ENCODE measurements at regions of chr2 and their contacts with region 1.

Region 1: GRCh38 chr2:232955856-232956255 is 57.2 kb downstream of the NGEF start:
- DNase-seq: peak; percentile 13
- ATAC-seq: peak; percentile 77
- H3K4me3 ChIP-seq: no peak overlapping the region
- H3K27ac ChIP-seq: no peak overlapping the region; the same call in 1 of the 2 replicates
- H3K4me1 ChIP-seq: peaks cover 19% of the 10 kb centered on the region
- H3K27me3 ChIP-seq: no peaks in the 10 kb centered on the region
- CTCF ChIP-seq: no peak
- EP300 ChIP-seq: no peak
- POLR2A ChIP-seq: no peak
- RAD21 ChIP-seq: no peak

Region 2: DNA sequence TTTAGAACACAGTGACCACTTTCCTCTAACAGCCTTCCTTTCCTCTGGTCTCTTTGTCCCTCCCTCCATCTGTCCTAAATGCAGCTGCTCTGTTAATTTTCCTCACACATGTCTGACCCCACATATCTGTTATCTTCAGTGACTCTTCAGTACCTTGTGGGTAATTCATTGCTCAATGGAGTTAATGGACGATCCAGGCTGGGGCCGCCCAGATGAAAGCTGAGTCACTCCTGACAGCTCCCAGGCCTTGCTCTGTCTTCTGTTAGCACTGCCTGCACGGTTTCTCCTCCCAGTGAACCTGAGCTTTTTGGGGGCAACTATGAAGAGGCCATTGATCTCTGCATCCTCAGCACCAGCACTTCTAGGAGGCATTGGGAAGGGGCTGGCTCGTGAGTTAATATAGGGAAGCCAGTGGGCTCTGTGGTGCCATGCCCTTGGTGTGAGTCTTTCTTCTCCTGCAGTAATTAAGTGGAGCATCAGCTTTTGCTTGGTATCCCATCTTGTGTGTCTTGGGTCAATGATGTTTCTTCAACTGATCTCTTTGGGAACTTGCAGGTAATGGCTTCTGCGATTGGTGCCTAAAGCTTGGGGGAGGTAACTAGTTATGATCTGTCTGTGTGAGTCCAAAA is 18.5 kb before region 1 on chr2:
- CTCF ChIA-PET with region 1: interaction called, 23 read pairs
- POLR2A ChIA-PET with region 1: interaction called, 15 read pairs
- RAD21 ChIA-PET with region 1: interaction called, 22 read pairs
- SMC1A ChIA-PET with region 1: interaction called, 52 read pairs
- in situ Hi-C with region 1: no loop called
- intact Hi-C with region 1: no loop called
- DNase-seq: no peak
- ATAC-seq: no peak
- H3K4me3 ChIP-seq: no peak overlapping the region
- H3K27ac ChIP-seq: no peak overlapping the region
- H3K4me1 ChIP-seq: no peaks in the 10 kb centered on the region
- H3K27me3 ChIP-seq: peaks cover 0 to 4% of the 10 kb centered on the region in 2 experiments; a peak in 1 of 4 replicates
- CTCF ChIP-seq: no peak
- EP300 ChIP-seq: no peak
- POLR2A ChIP-seq: no peak
- RAD21 ChIP-seq: no peak

Region 3: DNA sequence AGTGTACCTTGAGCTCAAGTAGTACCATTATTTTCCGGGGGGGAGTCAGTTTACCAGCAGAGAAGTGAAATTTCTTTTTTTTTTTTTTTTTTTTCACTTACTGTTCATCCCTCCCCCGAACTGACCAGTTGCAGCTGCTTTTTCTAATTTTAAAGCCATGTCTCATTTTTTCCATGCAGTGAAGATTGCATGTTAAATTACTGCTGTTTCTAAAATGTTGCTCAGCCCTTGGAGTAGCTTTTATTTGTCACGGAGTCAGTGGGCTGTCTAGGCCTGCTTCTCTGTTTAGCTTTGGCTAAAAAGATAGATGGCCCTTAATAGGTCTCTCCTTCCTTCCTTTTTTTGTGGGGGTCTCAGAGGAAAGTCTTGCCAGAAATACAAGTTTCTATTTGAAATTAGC is 13.0 kb before region 1 on chr2:
- CTCF ChIA-PET with region 1: interaction called, 23 read pairs
- POLR2A ChIA-PET with region 1: interaction called, 15 read pairs
- RAD21 ChIA-PET with region 1: interaction called, 22 read pairs
- SMC1A ChIA-PET with region 1: interaction called, 52 read pairs
- in situ Hi-C with region 1: no loop called
- intact Hi-C with region 1: no loop called
- DNase-seq: no peak
- ATAC-seq: 0 out of 3 replicates have a peak, but pooled peaks have one; percentile 23
- H3K4me3 ChIP-seq: no peak overlapping the region
- H3K27ac ChIP-seq: no peak overlapping the region
- H3K4me1 ChIP-seq: no peaks in the 10 kb centered on the region
- H3K27me3 ChIP-seq: no peaks in the 10 kb centered on the region
- CTCF ChIP-seq: no peak
- EP300 ChIP-seq: no peak
- POLR2A ChIP-seq: no peak
- RAD21 ChIP-seq: no peak